B cell (primary cell): ENCODE measurements at regions of chr2 and their contacts with region 1.

Region 1: DNA sequence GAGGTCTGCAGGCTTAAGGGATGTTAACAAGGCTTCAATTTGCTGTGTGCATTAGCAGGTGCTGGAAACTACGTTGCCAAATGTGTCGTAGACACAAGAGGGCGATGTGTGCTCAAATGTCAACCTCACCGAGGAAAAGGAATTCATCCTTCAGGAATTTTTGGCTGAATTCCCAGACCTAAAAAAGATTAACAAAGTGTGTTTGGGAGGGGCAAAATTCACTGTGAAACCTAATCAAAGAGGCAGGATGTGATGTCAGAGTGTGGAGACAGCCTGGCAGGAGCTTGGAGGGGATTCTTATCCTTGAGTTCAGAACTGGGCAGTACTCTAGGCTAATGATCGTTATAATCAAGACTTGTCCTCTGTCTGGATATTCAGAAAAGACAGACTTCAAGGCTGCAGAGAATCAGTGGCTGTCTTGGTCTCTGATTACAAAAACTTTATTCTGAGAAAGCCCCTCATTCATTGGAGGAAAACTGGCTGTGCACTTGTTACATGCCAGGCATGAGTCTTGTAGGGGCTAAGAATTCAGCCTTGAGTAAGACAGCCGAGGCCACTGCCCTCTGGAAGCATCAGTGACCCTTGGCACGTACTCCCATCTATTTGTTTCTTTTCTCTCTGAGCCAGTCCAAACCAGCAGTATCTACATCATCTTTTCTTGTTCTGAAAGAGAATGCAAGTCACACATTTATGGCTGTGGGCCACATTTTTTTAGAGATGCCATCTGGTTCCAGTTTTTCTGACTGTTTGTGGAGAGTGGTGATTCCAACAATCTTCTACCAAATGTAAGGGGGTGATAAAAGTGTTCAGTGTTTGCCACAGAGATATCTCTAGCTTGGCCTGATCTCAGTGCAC is 18.7 kb upstream of the SCYGR1 start:
- DNase-seq: no peak
- ATAC-seq: no peak
- H3K4me3 ChIP-seq: no peak overlapping the region
- H3K4me3 Mint-ChIP-seq: no peak overlapping the region
- H3K27ac ChIP-seq: no peak overlapping the region
- H3K27ac Mint-ChIP-seq: no peak overlapping the region
- H3K4me1 ChIP-seq: peaks cover 29 to 32% of the 10 kb centered on the region in 2 donors
- H3K4me1 Mint-ChIP-seq: peaks cover 41% of the 10 kb centered on the region
- H3K27me3 ChIP-seq: no peaks in the 10 kb centered on the region
- H3K27me3 Mint-ChIP-seq: no peaks in the 10 kb centered on the region
- CTCF ChIP-seq: peak; percentile 13

Region 2: GRCh38 chr2:227388537-227389011 is 17.8 kb before region 1 on chr2:
- CTCF ChIA-PET with region 1: interaction called, 10 read pairs
- POLR2A ChIA-PET with region 1: interaction called, 7 read pairs
- intact Hi-C with region 1: no loop called
- DNase-seq: no peak
- ATAC-seq: no peak
- H3K4me3 ChIP-seq: no peak overlapping the region
- H3K4me3 Mint-ChIP-seq: no peak overlapping the region
- H3K27ac ChIP-seq: no peak overlapping the region
- H3K27ac Mint-ChIP-seq: peak overlapping the region; percentile 63
- H3K4me1 ChIP-seq: peaks cover 29 to 39% of the 10 kb centered on the region in 2 donors
- H3K4me1 Mint-ChIP-seq: peaks cover 42% of the 10 kb centered on the region
- H3K27me3 ChIP-seq: no peaks in the 10 kb centered on the region
- H3K27me3 Mint-ChIP-seq: no peaks in the 10 kb centered on the region
- CTCF ChIP-seq: no peak